Activated T-helper 2 cell treated with anti-CD3 and anti-CD28 coated beads, Interferon-gamma antibody, Interleukin-2, Interleukin-4, amounts not matched to agents 10 μg/mL and 5 μg/mL and 100 μg/mL, durations not matched to agents 14 hours and 24 hours and 36 hours (primary cell): ENCODE measurements at regions of chr18 and their contacts with region 1.

Region 1: GRCh38 chr18:32092422-32093101 is 888 bp downstream of the RNF138 start:
- DNase-seq: peak; percentile 98
- H3K4me3 Mint-ChIP-seq: peak overlapping the region; percentile 94
- H3K27ac Mint-ChIP-seq: peak overlapping the region; percentile 93
- H3K4me1 Mint-ChIP-seq: peaks cover 40% of the 10 kb centered on the region
- H3K27me3 Mint-ChIP-seq: no peaks in the 10 kb centered on the region

Region 2: GRCh38 chr18:32040936-32041335 is 51.6 kb before region 1 on chr18:
- intact Hi-C with region 1: loop called (anchors 2 kb)
- DNase-seq: peak; percentile 66
- H3K4me3 Mint-ChIP-seq: peak overlapping the region; percentile 64
- H3K27ac Mint-ChIP-seq: peak overlapping the region; percentile 91
- H3K4me1 Mint-ChIP-seq: peaks cover 61% of the 10 kb centered on the region
- H3K27me3 Mint-ChIP-seq: no peaks in the 10 kb centered on the region

Region 3: GRCh38 chr18:32048507-32049091 is 44.0 kb before region 1 on chr18:
- intact Hi-C with region 1: loop called (anchors 2 kb)
- DNase-seq: no peak
- H3K4me3 Mint-ChIP-seq: peak overlapping the region; percentile 63
- H3K27ac Mint-ChIP-seq: peak overlapping the region; percentile 97
- H3K4me1 Mint-ChIP-seq: peaks cover 41% of the 10 kb centered on the region
- H3K27me3 Mint-ChIP-seq: no peaks in the 10 kb centered on the region

Region 4: DNA sequence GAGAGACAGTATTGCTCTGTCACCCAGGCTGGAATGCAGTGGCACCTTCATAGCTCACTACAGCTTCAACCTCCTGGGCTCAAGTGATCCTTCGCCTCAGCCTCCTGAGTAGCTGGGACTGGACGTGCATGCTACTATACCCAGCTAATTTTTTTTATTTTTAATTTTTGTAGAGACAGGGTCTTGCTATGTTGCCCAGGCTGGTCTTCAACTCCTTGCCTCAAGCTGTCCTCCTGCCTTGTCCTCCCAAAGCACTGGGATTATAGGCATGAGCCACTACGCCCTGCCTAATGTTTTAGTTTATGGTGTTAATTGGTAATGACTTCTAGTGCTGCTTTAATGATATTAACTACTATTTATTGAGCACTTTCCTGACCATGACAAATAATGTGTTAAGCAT is 17.4 kb after region 1 on chr18:
- intact Hi-C with region 1: loop called (anchors 2 kb)
- DNase-seq: no peak
- H3K4me3 Mint-ChIP-seq: no peak overlapping the region
- H3K27ac Mint-ChIP-seq: peak overlapping the region; percentile 12
- H3K4me1 Mint-ChIP-seq: peaks cover 50% of the 10 kb centered on the region
- H3K27me3 Mint-ChIP-seq: no peaks in the 10 kb centered on the region